AG04450 (cell line): ENCODE measurements at regions of chr12 and their contacts with region 1.

Region 1: DNA sequence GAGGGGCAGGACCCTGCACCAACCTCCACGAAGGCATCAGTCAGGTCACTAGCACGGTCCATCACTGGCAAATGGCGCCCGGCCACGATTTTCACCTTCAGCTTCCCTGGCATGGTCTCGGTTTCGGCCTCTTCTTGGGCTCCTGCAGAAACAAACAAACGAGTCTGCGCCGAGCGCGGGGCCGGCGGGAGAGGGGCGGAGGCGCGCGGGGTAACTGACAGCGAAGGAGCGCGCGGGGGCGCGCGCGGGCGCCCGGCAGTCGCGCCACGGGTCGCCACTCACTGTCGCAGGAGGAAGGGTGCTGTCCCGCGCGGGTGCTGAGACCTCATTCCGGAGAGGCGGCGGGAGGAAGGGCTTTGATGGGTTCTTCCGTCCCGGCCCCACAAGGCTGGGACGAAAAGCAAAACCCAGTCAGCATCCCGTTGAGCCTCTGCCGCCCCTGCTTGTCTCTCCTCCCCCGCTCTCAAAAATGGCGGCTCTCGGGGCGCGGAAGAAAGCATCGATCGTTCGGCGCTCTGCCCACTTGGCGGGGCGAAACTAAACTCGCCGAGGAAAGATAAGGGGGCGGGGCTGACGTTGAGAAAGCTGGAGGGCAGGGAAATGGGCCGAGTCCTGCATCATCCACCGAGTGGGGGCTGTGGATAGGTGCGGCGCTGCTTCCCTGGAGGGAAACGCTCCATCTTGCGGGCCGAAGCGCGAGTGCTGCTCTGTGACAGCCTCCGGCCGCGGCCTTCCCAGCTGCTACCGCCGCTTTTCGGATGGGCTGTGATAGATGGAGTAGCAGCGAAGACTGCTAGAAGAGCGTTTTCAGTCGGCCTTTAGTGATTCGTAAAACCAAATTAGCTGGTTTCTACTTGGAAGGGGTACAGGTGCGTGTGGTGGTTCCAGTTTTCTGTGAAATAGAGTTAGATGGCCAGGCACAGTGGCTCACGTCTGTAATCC is at the start of gene C2CD5:
- DNase-seq: peak; percentile 94
- H3K4me3 ChIP-seq: peak within 1 kb of the TSS; percentile 94
- H3K27ac ChIP-seq: peak within 1 kb of the TSS; percentile 81
- H3K27me3 ChIP-seq: no peaks in the 10 kb centered on the region
- CTCF ChIP-seq: peak; percentile 42
- polyA plus RNA-seq, gene C2CD5: 26.4 and 38.3 TPM in 2 replicates

Region 2: GRCh38 chr12:22529281-22530060 is 14.8 kb before region 1 on chr12:
- CTCF ChIA-PET with region 1: interaction called, 13 read pairs
- POLR2A ChIA-PET with region 1: interaction called, 5 read pairs
- DNase-seq: no peak
- H3K4me3 ChIP-seq: no peak overlapping the region
- H3K27ac ChIP-seq: no peak overlapping the region
- H3K27me3 ChIP-seq: no peaks in the 10 kb centered on the region
- CTCF ChIP-seq: peak; percentile 46

Region 3: GRCh38 chr12:22624870-22625761 is 80.8 kb after region 1 on chr12 and contains the start of gene ETNK1:
- CTCF ChIA-PET with region 1: interaction called, 5 read pairs
- POLR2A ChIA-PET with region 1: interaction called, 23 read pairs
- DNase-seq: peak; percentile 70
- H3K4me3 ChIP-seq: peak within 1 kb of the TSS; percentile 92
- H3K27ac ChIP-seq: peak within 1 kb of the TSS; percentile 90
- H3K27me3 ChIP-seq: no peaks in the 10 kb centered on the region
- CTCF ChIP-seq: no peak
- polyA plus RNA-seq, gene ETNK1: 17.2 and 22.8 TPM in 2 replicates

Region 4: GRCh38 chr12:22938323-22938722 is 394.0 kb after region 1 on chr12:
- CTCF ChIA-PET with region 1: no interaction called
- POLR2A ChIA-PET with region 1: no interaction called
- DNase-seq: no peak
- H3K4me3 ChIP-seq: no peak overlapping the region
- H3K27ac ChIP-seq: no peak overlapping the region
- H3K27me3 ChIP-seq: no peaks in the 10 kb centered on the region
- CTCF ChIP-seq: no peak